GM12878 (cell line): ENCODE measurements at regions of chr5 and their contacts with region 1.

Region 1: DNA sequence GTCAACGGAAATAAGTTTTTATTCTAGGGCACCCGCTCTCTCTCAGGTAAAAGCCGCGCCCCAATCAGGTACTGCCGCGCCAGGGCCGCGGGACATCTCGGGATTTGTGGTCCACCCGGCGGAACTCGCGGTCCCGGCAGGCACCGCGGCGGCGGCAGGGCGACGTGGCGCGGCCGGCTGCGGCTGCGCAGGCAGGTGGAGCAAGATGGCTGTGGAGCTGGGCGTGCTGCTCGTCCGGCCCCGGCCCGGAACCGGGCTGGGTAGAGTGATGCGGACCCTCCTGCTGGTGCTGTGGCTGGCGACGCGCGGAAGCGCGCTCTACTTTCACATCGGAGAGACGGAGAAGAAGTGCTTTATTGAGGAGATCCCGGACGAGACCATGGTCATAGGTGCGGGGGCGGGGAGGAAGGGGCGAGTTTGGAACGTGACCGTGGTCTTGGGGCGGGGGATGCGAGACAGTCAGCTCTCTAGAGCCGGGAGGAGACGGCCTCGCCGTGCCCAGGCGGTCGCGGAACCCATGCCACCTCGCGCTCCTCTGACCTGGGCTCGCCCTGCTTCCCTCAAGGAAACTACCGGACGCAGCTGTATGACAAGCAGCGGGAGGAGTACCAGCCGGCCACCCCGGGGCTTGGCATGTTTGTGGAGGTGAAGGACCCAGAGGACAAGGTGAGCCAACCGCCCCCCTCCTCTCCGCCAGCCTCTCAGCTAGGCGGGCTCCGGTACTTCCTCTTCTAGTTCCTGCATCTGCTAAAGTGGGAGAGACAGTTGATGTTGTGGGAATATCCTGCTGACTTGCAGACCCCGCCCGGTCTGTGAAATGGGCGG is at the start of gene TMED9:
- DNase-seq: no peak
- ATAC-seq: peak; percentile 99
- H3K4me3 ChIP-seq: peak within 1 kb of the TSS; percentile 88
- H3K27ac ChIP-seq: peak within 1 kb of the TSS; percentile 85
- H3K4me1 ChIP-seq: peaks cover 8% of the 10 kb centered on the region
- H3K27me3 ChIP-seq: no peaks in the 10 kb centered on the region
- CTCF ChIP-seq: no peak; a peak in 1 of 6 replicates
- EP300 ChIP-seq: no peak
- POLR2A ChIP-seq: peak; percentile 98
- RAD21 ChIP-seq: no peak
- polyA plus RNA-seq, gene TMED9: 35.7 to 46.6 TPM

Region 2: GRCh38 chr5:177303121-177303924 is 288.9 kb before region 1 on chr5 and contains the starts of genes PRELID1 and RAB24:
- CTCF ChIA-PET with region 1: no interaction called
- POLR2A ChIA-PET with region 1: no interaction called
- RAD21 ChIA-PET with region 1: no interaction called
- SMC1A ChIA-PET with region 1: no interaction called
- in situ Hi-C with region 1: no loop called
- intact Hi-C with region 1: loop called (anchors 10 kb)
- DNase-seq: no peak
- ATAC-seq: peak; percentile 71
- H3K4me3 ChIP-seq: peak within 1 kb of the TSS; percentile 75
- H3K27ac ChIP-seq: peak within 1 kb of the TSS; percentile 90
- H3K4me1 ChIP-seq: peaks cover 42% of the 10 kb centered on the region
- H3K27me3 ChIP-seq: no peaks in the 10 kb centered on the region
- CTCF ChIP-seq: peak; percentile 23 to 52 (median 34); a peak in 4 of 6 replicates
- EP300 ChIP-seq: no peak
- POLR2A ChIP-seq: peak; percentile 54
- RAD21 ChIP-seq: no peak
- polyA plus RNA-seq, gene PRELID1: 30.9 to 106 TPM
- polyA plus RNA-seq, gene RAB24: 8.0 to 12.8 TPM

Region 3: DNA sequence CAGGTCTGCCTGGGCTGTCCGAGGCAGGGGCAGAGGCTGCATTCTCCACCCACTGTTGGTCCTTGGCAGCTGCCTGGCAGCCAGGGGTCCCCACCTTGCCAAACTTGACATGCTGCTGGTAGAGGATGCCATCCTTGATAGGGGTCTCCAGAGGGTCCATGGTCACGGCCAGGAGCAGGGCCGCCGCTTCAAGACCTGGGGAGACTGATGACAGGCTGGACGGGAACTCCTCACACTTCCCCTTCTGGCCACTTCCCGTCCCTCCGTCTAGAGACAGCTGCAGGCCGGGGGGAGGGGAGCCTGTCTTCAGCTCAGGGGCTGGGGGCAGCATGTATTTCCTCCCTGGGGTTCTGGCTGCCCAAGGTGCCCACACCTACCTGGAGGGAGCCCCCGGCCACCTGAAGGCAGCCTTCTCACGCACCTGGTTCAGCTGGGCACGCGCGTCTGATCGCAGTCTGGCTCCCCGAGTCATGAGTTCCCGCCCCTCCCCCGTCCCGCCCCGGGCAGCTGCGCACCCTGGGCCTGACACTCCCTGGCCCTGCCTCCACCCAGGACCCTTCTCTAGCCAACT is 82.8 kb before region 1 on chr5 and contains the start of gene DOK3:
- CTCF ChIA-PET with region 1: interaction called, 4 read pairs
- POLR2A ChIA-PET with region 1: interaction called, 10 read pairs
- RAD21 ChIA-PET with region 1: interaction called, 5 read pairs
- SMC1A ChIA-PET with region 1: no interaction called
- in situ Hi-C with region 1: no loop called
- intact Hi-C with region 1: no loop called
- DNase-seq: no peak
- ATAC-seq: peak; percentile 63
- H3K4me3 ChIP-seq: peak within 1 kb of the TSS; percentile 87
- H3K27ac ChIP-seq: peak within 1 kb of the TSS; percentile 87
- H3K4me1 ChIP-seq: peaks cover 37% of the 10 kb centered on the region
- H3K27me3 ChIP-seq: no peaks in the 10 kb centered on the region
- CTCF ChIP-seq: no peak
- EP300 ChIP-seq: no peak
- POLR2A ChIP-seq: no peak
- RAD21 ChIP-seq: no peak
- polyA plus RNA-seq, gene DOK3: 6.6 to 8.0 TPM

Region 4: GRCh38 chr5:177516604-177517568 is 75.3 kb before region 1 on chr5 and contains the start of gene DDX41:
- CTCF ChIA-PET with region 1: no interaction called
- POLR2A ChIA-PET with region 1: interaction called, 8 read pairs
- RAD21 ChIA-PET with region 1: no interaction called
- SMC1A ChIA-PET with region 1: no interaction called
- in situ Hi-C with region 1: no loop called
- intact Hi-C with region 1: loop called (anchors 2 kb)
- DNase-seq: peak; percentile 90
- ATAC-seq: peak; percentile 92
- H3K4me3 ChIP-seq: peak within 1 kb of the TSS; percentile 77
- H3K27ac ChIP-seq: peak within 1 kb of the TSS; percentile 66
- H3K4me1 ChIP-seq: peaks cover 12% of the 10 kb centered on the region
- H3K27me3 ChIP-seq: no peaks in the 10 kb centered on the region
- CTCF ChIP-seq: no peak
- EP300 ChIP-seq: no peak
- POLR2A ChIP-seq: no peak
- RAD21 ChIP-seq: no peak
- polyA plus RNA-seq, gene DDX41: 32.7 to 67.6 TPM